Dendritic cell treated with granulocyte-macrophage colony-stimulating factor and Interleukin-4, amounts not matched to agents 40 ng/mL and 50 ng/mL, for 4 days (primary cell): ENCODE measurements at regions of chr14 and their contacts with region 1.

Region 1: DNA sequence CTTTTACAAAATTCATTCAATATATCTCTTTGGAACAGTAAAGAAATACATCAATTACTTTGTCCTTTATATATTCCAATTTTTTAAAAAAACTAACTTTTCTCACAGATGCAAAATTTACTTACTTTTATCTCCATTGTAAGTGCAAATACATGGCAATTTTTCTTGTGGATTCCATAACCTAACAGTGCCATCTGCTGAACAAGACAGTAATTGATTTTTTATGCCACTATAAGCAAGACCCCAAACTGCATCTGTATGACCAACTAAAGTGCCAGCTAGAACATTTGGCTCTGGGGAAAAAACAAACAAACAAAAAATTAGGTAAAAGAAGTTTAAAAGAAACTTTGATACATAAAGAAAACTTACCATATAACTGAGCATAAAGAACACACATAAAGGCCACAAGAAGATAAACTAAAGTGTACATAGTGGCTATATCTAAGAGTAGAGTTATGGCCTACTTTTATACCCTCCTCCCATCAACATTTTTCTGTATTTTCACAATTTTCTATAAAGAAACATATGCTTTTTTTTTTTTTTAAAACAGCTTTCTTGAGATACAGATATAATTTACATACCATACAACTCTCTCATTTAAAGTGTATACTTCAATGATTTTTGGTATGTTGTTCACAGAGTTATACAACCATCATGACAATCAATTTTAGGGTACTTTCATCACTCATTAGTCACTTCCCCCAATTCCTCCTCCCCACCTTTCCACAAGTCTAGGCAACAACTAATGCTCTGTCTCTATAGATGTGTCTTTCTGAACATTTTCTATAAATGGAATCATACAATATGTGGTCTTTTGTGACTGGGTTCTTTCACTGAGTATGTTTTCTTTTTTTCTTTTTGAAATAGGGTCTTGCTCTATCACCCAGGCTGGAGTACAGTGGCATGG is 32.6 kb downstream of the COCH start:
- H3K4me3 Mint-ChIP-seq: no peak overlapping the region
- H3K27ac Mint-ChIP-seq: no peak overlapping the region
- H3K4me1 Mint-ChIP-seq: no peaks in the 10 kb centered on the region
- H3K27me3 Mint-ChIP-seq: no peaks in the 10 kb centered on the region

Region 2: DNA sequence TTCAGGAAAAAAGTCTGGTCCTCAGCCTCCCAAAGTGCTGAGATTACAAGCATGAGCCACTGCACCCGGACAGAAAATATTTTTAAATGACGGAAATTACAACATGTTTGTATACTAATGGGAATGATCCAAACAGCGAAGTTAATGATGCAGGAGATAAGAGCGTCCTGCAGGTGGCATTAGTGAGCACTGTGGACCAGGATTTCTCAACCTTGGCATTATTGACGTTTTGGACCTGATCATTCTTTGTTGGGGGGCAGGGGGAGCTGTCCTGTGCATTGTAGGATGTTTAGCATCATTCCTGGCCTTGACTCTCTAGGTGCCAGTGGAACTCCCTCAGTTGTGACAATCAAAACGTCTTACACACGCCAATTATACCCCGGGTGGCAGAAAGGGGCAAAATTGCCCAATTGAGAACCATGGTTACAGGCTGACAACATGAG is 250.8 kb before region 1 on chr14:
- intact Hi-C with region 1: loop called (anchors 2 kb)
- H3K4me3 Mint-ChIP-seq: no peak overlapping the region
- H3K27ac Mint-ChIP-seq: no peak overlapping the region
- H3K4me1 Mint-ChIP-seq: no peaks in the 10 kb centered on the region
- H3K27me3 Mint-ChIP-seq: no peaks in the 10 kb centered on the region